Mammary epithelial cell (primary cell): ENCODE measurements at regions of chr9 and their contacts with region 1.

Region 1: GRCh38 chr9:127535834-127536233 is 76.2 kb upstream of the STXBP1 start:
- DNase-seq: no peak
- H3K4me3 ChIP-seq: no peak overlapping the region
- H3K27ac ChIP-seq: peak overlapping the region; percentile 92
- H3K4me1 ChIP-seq: peaks cover 67% of the 10 kb centered on the region
- H3K27me3 ChIP-seq: no peaks in the 10 kb centered on the region
- CTCF ChIP-seq: no peak

Region 2: GRCh38 chr9:127187231-127187956 is 348.4 kb before region 1 on chr9:
- CTCF ChIA-PET with region 1: no interaction called
- dilution Hi-C with region 1: no loop called
- in situ Hi-C with region 1: no loop called
- intact Hi-C with region 1: no loop called
- DNase-seq: peak; percentile 93
- H3K4me3 ChIP-seq: no peak overlapping the region
- H3K27ac ChIP-seq: no peak overlapping the region
- H3K4me1 ChIP-seq: peaks cover 8% of the 10 kb centered on the region
- H3K27me3 ChIP-seq: peaks cover 9% of the 10 kb centered on the region
- CTCF ChIP-seq: no peak

Region 3: GRCh38 chr9:127450830-127451724 is 84.8 kb before region 1 on chr9 and contains the starts of genes LRSAM1 and RPL12:
- CTCF ChIA-PET with region 1: no interaction called
- dilution Hi-C with region 1: no loop called
- in situ Hi-C with region 1: no loop called
- intact Hi-C with region 1: no loop called
- DNase-seq: peak; percentile 90
- H3K4me3 ChIP-seq: peak within 1 kb of the TSS; percentile 79 to 91 (median 90)
- H3K27ac ChIP-seq: peak within 1 kb of the TSS; percentile 80
- H3K4me1 ChIP-seq: peaks cover 26% of the 10 kb centered on the region
- H3K27me3 ChIP-seq: no peaks in the 10 kb centered on the region
- CTCF ChIP-seq: peak in 1 of 2 donors; percentile 3
- total RNA-seq, gene LRSAM1: 15.5 to 20.6 TPM
- total RNA-seq, gene RPL12: 1,316 to 1,441 TPM

Region 4: DNA sequence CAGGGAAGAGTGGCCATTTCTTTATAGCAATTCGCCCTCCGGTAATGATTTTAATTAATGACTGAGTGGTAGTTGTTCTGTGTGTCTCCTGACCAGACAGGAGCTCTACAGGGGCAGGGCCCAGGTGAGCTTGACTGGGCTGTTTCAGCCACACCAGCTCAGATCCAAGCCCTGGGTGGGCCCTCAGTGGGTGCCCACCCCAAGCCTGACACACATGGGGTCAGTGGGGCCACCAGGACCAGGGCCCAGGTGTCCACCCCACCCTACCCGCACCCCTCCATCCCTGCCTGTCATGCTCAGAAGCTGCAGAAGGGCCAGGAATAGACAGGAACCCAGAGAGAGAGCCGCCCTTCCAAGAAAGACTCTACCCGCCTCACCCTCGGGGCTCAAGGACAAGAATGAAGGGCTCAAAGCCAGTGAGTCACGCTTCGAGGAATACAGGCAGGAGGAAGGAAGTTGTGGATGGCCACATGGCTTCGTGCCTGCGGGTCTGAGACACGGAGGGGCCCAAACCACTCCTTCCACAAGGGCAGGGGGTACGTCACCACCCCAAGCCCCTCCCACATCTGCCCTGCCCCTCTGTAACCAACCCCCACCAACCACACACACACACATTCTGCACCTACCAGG is 20.0 kb after region 1 on chr9:
- CTCF ChIA-PET with region 1: interaction called, 11 read pairs
- dilution Hi-C with region 1: no loop called
- in situ Hi-C with region 1: no loop called
- intact Hi-C with region 1: no loop called
- DNase-seq: peak; percentile 94
- H3K4me3 ChIP-seq: peak overlapping the region in 1 of 3 experiments; percentile 1
- H3K27ac ChIP-seq: peak overlapping the region; percentile 67
- H3K4me1 ChIP-seq: peaks cover 68% of the 10 kb centered on the region
- H3K27me3 ChIP-seq: no peaks in the 10 kb centered on the region
- CTCF ChIP-seq: no peak

Region 5: DNA sequence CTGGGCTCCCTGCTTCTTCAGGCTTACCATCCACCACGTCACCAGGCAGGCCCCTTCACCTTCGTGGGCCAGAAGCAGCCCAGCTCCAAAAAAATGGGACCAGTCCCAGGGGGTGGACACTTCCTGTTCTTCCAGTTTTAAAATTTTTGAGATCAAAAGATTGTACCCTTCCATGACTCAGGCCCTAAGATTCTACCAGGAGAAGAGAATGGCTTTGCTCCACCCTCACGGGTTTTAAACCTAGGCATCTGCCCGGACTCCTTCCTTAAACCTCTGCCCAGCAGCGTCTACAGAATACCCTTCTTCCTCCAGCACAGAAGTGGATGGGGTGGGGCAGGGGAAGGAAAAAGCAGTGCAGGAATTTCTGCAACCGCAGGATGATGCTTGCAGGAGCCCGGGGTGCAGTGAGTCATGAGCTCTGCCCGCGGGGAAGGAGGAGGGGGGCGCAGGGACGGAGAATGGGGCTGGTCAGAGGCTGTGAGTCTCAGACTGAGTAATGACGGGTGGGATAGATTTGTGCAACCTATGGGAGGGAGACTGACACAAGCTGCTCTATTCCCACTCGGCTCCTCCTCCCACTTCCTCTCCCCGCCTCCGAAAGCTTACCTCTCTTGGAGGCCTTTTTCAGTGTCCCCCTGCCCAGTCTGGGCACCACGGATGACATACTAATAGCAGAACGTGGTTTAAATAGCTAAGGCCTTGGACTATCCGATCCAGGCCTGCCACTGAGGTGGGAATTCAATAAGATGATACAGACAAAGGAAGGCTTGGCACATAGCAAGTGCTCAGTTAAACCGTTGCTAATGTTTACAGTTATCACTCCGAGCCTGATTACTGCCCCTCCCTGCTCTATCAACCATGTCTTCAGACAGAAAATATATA is 26.0 kb after region 1 on chr9:
- CTCF ChIA-PET with region 1: no interaction called
- dilution Hi-C with region 1: no loop called
- in situ Hi-C with region 1: no loop called
- intact Hi-C with region 1: loop called (anchors 1 kb)
- DNase-seq: peak; percentile 99
- H3K4me3 ChIP-seq: no peak overlapping the region
- H3K27ac ChIP-seq: peak overlapping the region; percentile 76
- H3K4me1 ChIP-seq: peaks cover 87% of the 10 kb centered on the region
- H3K27me3 ChIP-seq: no peaks in the 10 kb centered on the region
- CTCF ChIP-seq: no peak

Region 6: GRCh38 chr9:127578955-127579853 is 43.4 kb after region 1 on chr9:
- CTCF ChIA-PET with region 1: no interaction called
- dilution Hi-C with region 1: no loop called
- in situ Hi-C with region 1: no loop called
- intact Hi-C with region 1: loop called (anchors 2 kb)
- DNase-seq: peak; percentile 98
- H3K4me3 ChIP-seq: peak overlapping the region; percentile 15 to 42 (median 33)
- H3K27ac ChIP-seq: peak overlapping the region; percentile 84
- H3K4me1 ChIP-seq: peaks cover 29% of the 10 kb centered on the region
- H3K27me3 ChIP-seq: no peaks in the 10 kb centered on the region
- CTCF ChIP-seq: peak in 1 of 2 donors; percentile 31